ENCODE measurements at regions of chr2 and their contacts with region 1.

Region 1: GRCh38 chr2:157596992-157597681 is 31.5 kb downstream of the ACVR1C start:
- DNase-seq: peak; percentile 46 to 69 (median 66)
- ATAC-seq: peak; percentile 75 to 78
- H3K4me3 ChIP-seq: peak overlapping the region; percentile 44
- H3K27ac ChIP-seq: no peak overlapping the region
- H3K4me1 ChIP-seq: no peaks in the 10 kb centered on the region
- H3K27me3 ChIP-seq: no peaks in the 10 kb centered on the region

Region 2: GRCh38 chr2:157302492-157303099 is 294.5 kb before region 1 on chr2:
- intact Hi-C with region 1: loop called in 3 of 4 experiments (anchors 5 to 10 kb)
- DNase-seq: no peak
- ATAC-seq: peak; percentile 70 to 75
- H3K4me3 ChIP-seq: no peak overlapping the region
- H3K27ac ChIP-seq: no peak overlapping the region
- H3K4me1 ChIP-seq: no peaks in the 10 kb centered on the region
- H3K27me3 ChIP-seq: no peaks in the 10 kb centered on the region

Region 3: DNA sequence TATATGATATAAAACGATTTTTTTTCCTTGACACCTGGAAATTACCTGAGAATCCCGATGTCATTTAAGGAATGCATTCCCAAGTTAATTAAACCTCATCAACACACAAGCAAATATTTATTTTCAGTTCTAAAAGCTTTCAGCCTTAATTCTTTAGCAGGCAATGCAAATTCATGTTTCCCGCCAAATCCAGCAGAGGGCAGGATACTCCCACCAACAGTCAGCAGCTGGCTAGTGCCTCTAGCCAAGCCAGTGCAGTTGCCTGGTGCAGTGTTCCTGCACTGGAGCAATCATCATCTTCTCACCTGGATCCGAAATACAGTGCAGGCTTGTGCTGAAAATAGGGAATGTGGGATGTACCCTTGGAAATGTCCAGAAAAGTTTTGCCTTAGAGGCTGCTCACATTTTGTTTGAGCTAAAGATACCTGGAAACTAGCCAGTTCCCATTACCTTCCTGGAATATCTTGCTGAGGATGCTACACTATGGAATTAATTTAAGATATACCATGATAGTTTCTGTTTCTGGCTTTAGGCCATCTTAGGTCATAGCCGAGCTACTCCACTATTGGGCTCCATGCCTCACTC is 104.9 kb before region 1 on chr2:
- intact Hi-C with region 1: loop called in 2 of 4 experiments (anchors 10 kb)
- DNase-seq: peak; percentile 60 to 85 (median 67)
- ATAC-seq: peak; percentile 72 to 81
- H3K4me3 ChIP-seq: no peak overlapping the region
- H3K27ac ChIP-seq: no peak overlapping the region
- H3K4me1 ChIP-seq: no peaks in the 10 kb centered on the region
- H3K27me3 ChIP-seq: no peaks in the 10 kb centered on the region

Region 4: GRCh38 chr2:157538064-157538463 is 59.1 kb before region 1 on chr2:
- intact Hi-C with region 1: no loop called
- DNase-seq: no peak
- ATAC-seq: no peak
- H3K4me3 ChIP-seq: no peak overlapping the region
- H3K27ac ChIP-seq: no peak overlapping the region
- H3K4me1 ChIP-seq: no peaks in the 10 kb centered on the region
- H3K27me3 ChIP-seq: no peaks in the 10 kb centered on the region

Region 5: DNA sequence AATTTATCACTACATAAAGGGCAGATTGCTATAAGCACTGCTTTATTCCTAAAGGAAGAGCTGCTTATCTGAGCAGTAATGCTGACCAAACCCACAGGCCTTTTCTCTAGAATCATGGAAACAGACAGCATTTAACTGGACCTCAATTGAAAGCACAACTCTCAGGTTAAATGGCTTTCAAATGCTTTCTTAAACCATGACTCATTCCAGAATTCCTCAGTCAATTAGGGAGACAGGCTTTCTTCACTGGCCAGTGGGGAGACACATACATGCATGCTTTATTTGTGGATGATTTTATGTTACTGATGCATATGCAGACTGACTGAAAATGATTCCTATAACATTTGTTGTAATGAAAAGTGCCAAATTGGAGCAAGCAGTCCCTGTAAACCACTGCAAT is 164.4 kb after region 1 on chr2:
- intact Hi-C with region 1: no loop called
- DNase-seq: no peak
- ATAC-seq: no peak
- H3K4me3 ChIP-seq: no peak overlapping the region
- H3K27ac ChIP-seq: no peak overlapping the region
- H3K4me1 ChIP-seq: no peaks in the 10 kb centered on the region
- H3K27me3 ChIP-seq: no peaks in the 10 kb centered on the region

Region 6: DNA sequence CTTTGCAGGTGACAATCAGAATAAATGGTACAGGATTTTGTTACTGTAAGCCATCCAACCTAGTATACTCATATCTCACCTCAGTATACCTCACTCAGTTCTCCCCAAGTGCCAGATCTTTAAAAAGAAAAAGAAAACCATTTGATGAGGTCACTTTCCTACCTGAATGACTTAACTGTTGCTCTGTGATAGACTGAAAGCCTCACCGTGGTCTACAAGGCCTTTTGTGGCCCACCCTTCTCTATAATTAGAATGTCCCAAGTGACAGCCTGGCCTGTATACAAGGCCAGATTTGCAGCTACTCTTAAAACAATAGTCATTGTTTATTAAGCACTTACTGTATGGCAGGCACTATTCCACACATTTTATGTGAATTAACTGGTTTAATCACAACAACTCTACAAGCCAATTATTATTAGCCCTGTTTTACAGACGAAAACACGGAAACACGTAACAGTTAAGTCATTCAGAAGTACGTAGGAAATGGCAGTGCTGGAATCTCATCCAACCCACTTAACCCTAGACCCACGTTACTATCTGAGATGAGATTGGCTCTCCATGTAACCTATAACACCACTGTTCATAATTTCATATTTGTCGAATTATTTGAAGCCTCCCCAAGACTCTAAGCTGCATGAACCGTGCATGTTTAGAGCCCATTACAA is 887.9 kb after region 1 on chr2:
- intact Hi-C with region 1: no loop called
- DNase-seq: no peak
- ATAC-seq: peak in 1 of 2 donors; percentile 14
- H3K4me3 ChIP-seq: no peak overlapping the region
- H3K27ac ChIP-seq: no peak overlapping the region
- H3K4me1 ChIP-seq: peaks cover 2% of the 10 kb centered on the region
- H3K27me3 ChIP-seq: no peaks in the 10 kb centered on the region